ENCODE measurements at regions of chr2 and their contacts with region 1.

Region 1: DNA sequence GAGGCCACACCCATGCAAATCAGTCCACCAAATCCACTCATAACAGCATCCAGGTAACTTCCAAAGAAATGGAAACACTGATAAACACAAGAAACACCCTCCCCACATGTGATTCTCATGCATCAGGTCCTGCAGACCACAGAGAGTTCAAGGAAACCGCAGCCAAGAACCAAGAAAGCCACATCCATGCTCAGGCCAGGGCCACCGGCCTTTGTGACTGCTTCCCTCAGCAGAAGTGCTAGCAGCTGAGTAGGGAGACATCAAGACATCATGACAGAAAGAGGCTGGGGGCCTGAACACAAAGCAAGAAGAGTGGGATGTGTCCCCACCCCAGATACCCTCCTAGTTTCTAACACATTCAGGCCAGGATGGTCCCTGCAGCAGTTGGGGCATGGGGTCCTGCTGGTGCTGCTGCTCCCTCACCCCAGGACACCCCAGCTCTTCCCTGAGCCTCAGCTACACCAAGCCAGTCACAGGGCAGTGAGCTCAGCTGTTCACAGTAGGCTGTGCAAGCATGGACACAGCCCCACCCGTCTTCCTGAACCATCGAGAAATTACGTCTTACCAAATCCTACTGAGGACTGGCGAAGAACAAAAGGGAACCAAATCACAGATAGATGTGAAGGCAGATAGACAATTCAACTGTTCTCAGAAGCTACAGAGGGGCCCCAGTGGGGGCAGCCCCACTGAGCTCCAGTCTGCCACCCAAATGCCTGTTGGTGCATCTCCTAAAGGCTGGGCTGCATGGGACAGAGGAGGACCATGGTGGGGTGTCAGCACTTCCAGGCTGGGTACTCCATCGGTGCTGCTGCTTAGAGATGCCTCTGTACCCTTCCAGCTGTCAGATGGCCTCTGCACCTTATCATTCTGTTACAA is 60.9 kb downstream of the HDAC4 start:
- DNase-seq: no peak
- ATAC-seq: no peak
- H3K4me3 ChIP-seq: no peak overlapping the region
- H3K27ac ChIP-seq: no peak overlapping the region
- H3K4me1 ChIP-seq: peaks cover 0 to 4% of the 10 kb centered on the region in 2 donors
- H3K27me3 ChIP-seq: no peaks in the 10 kb centered on the region
- CTCF ChIP-seq: no peak
- POLR2A ChIP-seq: no peak

Region 2: GRCh38 chr2:239380831-239381708 is 41.1 kb after region 1 on chr2:
- in situ Hi-C with region 1: loop called in 1 of 4 experiments (anchors 10 kb)
- intact Hi-C with region 1: no loop called
- DNase-seq: no peak
- ATAC-seq: no peak
- H3K4me3 ChIP-seq: no peak overlapping the region
- H3K27ac ChIP-seq: no peak overlapping the region
- H3K4me1 ChIP-seq: no peaks in the 10 kb centered on the region
- H3K27me3 ChIP-seq: no peaks in the 10 kb centered on the region
- CTCF ChIP-seq: no peak
- POLR2A ChIP-seq: no peak

Measured in gastrocnemius medialis (tissue), 4 donors.